AG04450 (cell line): ENCODE measurements at regions of chr19 and their contacts with region 1.

Region 1: GRCh38 chr19:46442808-46443450 is 14.2 kb upstream of the PNMA8C start:
- DNase-seq: peak; percentile 44
- H3K4me3 ChIP-seq: no peak overlapping the region
- H3K27ac ChIP-seq: no peak overlapping the region
- H3K27me3 ChIP-seq: peaks cover 5% of the 10 kb centered on the region
- CTCF ChIP-seq: no peak

Region 2: DNA sequence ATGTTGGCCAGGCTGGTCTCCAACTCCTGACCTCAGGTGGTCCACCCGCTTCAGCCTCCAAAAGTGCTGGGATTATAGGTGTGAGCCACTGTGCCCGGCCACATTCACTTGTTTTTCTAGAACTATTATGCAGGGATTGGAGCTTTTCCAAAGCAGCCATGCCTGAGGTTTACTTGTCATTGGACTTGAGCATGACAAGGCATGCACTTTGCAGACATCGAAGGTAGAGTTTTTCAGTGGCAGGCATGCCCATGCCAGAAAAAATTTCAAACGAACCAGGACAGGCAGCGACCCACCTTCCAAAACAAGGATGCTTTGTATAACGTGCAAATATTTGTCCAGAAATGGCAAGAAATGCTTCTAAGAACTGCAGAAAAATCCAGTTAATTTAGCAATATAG is 10.7 kb after region 1 on chr19:
- CTCF ChIA-PET with region 1: no interaction called
- POLR2A ChIA-PET with region 1: no interaction called
- DNase-seq: no peak
- H3K4me3 ChIP-seq: no peak overlapping the region
- H3K27ac ChIP-seq: no peak overlapping the region
- H3K27me3 ChIP-seq: peaks cover 4% of the 10 kb centered on the region
- CTCF ChIP-seq: no peak

Region 3: GRCh38 chr19:46537136-46538097 is 94.5 kb after region 1 on chr19:
- CTCF ChIA-PET with region 1: interaction called, 10 read pairs
- POLR2A ChIA-PET with region 1: no interaction called
- DNase-seq: no peak
- H3K4me3 ChIP-seq: no peak overlapping the region
- H3K27ac ChIP-seq: no peak overlapping the region
- H3K27me3 ChIP-seq: peaks cover 18% of the 10 kb centered on the region
- CTCF ChIP-seq: peak; percentile 91